Transverse colon (tissue), 4 donors: ENCODE measurements at regions of chrX and their contacts with region 1.

Region 1: DNA sequence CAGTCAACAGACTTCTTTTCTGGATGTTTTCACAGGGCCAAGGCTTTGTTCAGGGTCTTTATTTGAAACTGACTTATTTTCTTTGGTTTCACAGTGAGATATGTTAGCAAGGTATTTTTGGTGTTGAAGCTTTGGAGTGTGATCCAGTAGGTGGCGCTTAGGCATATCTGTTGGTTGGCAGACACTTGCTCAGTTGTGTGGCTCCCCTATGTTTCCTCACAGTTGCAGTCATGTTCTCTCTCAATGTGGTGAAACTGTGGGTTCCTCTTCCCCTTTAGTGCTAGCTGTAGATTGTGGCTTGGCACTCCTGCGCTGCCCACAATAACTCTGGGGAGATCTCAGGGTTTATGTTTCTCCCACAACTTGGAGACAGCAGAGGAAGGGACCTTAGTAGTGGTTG is 460.8 kb downstream of the SLITRK2 start:
- DNase-seq: no peak
- H3K4me3 ChIP-seq: no peak overlapping the region
- H3K27ac ChIP-seq: no peak overlapping the region
- H3K4me1 ChIP-seq: no peaks in the 10 kb centered on the region
- H3K27me3 ChIP-seq: no peaks in the 10 kb centered on the region
- CTCF ChIP-seq: no peak
- EP300 ChIP-seq: no peak
- POLR2A ChIP-seq: no peak

Region 2: DNA sequence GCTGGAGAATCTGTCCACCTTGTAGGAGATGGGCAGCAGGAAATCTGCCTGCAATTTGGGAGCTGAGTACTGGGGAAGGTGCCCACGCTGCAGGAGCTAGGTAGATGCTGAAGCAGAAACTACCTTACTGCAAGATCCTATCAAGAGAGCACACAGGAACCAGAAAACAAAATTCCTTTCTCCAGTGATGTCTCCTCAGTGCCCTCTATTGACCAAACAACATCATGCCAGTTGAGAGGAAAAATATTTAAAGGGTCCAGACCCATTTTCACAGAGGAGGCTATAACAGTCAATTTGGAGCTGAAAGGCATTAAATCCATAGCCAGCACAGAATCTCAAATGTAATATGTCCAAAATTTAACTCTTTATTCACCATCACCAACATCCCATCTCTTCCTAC is 53.9 kb before region 1 on chrX:
- in situ Hi-C with region 1: no loop called
- intact Hi-C with region 1: loop called (anchors 10 kb)
- DNase-seq: no peak
- H3K4me3 ChIP-seq: no peak overlapping the region
- H3K27ac ChIP-seq: no peak overlapping the region
- H3K4me1 ChIP-seq: no peaks in the 10 kb centered on the region
- H3K27me3 ChIP-seq: no peaks in the 10 kb centered on the region
- CTCF ChIP-seq: peak in 1 of 5 experiments; percentile 9
- EP300 ChIP-seq: no peak
- POLR2A ChIP-seq: no peak